ENCODE measurements at regions of chr16 and their contacts with region 1.

Region 1: DNA sequence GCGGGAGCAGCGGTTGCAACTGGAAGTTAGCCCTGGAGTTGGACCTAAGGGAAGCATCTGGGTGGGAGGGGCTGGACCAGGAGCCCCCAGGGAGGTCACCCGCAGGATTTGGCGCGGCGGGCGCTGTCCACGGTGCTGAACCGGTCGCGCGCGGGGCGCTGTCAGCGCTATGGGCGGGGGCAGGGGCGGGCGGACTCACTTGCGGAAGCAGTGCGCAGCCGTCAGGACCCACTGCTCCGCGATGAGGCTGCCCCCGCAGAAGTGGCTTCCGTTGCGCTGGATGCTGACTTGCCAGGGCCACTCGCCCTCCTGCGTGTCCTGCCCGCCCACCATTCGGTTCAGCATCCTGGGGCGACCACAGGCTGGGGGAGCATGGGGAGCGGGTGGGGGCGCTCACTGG is 4.5 kb downstream of the PRSS27 start:
- DNase-seq: peak in 4 of 5 donors; percentile 44 to 78 (median 69)
- H3K4me3 ChIP-seq: no peak overlapping the region
- H3K27ac ChIP-seq: no peak overlapping the region
- H3K4me1 ChIP-seq: peaks cover 1% of the 10 kb centered on the region
- H3K27me3 ChIP-seq: no peaks in the 10 kb centered on the region
- CTCF ChIP-seq: no peak
- EP300 ChIP-seq: no peak
- POLR2A ChIP-seq: no peak

Region 2: DNA sequence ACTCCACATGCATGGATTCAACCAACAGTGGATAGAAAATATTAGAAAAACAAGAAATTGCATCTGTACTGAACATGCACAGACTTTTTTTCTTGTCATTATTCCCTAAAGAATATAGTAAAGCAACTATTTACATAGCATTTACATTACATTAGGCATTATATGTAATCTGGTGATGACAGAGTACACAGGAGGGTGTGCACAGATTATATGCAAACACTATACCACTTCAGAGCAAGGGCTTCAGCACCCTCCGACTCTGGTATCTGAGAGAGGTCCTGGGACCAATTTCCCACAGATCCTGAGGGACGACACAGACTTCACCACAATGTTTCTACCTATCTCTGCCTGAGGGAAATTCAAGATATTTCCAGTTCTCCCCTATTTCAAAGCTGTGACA is 58.5 kb before region 1 on chr16:
- intact Hi-C with region 1: loop called in 1 of 4 experiments (anchors 10 kb)
- DNase-seq: no peak
- H3K4me3 ChIP-seq: no peak overlapping the region
- H3K27ac ChIP-seq: no peak overlapping the region
- H3K4me1 ChIP-seq: no peaks in the 10 kb centered on the region
- H3K27me3 ChIP-seq: no peaks in the 10 kb centered on the region
- CTCF ChIP-seq: no peak
- EP300 ChIP-seq: no peak
- POLR2A ChIP-seq: no peak

Region 3: DNA sequence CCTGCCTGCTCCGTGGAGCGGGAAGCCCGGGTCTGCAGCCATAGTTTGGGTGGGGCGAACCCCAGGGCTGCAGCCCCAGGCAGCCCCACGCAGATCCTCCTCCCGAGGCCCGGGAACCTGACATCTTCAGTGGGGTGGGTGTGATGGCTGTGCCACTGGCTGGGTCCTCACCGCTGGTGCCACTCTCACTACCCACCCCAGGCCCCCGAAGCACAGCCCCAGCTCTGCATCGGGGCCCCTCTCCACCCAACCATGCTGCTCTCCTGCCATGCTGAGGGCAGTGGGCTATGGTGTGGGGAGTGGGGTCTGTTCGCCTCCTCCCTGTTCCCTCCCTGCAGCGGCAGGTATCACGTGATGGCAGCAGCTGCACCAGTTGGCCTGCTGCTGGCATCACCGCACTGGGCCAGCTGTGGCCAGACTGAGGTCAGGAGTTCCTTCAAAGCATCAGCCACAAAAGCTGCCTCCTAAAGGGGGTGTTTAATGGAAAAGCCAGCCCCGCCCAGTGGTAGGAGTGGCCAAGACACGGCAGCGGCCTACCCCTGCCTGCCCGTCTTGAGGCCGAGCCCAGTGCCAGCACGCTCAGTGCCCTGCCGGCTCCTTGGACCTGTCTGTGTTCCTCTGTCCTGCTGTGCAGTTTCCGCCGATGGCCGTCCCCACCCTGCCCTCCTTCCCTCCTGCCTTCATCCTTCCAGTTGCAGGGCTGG is 22.4 kb before region 1 on chr16:
- intact Hi-C with region 1: no loop called
- DNase-seq: peak; percentile 49 to 83 (median 76)
- H3K4me3 ChIP-seq: no peak overlapping the region
- H3K27ac ChIP-seq: peak overlapping the region in 1 of 2 donors; percentile 23
- H3K4me1 ChIP-seq: peaks cover 18% of the 10 kb centered on the region
- H3K27me3 ChIP-seq: no peaks in the 10 kb centered on the region
- CTCF ChIP-seq: no peak
- EP300 ChIP-seq: no peak
- POLR2A ChIP-seq: no peak

Measured in ovary (tissue), 10 donors.